ENCODE measurements at regions of chr3 and their contacts with region 1.

Region 1: DNA sequence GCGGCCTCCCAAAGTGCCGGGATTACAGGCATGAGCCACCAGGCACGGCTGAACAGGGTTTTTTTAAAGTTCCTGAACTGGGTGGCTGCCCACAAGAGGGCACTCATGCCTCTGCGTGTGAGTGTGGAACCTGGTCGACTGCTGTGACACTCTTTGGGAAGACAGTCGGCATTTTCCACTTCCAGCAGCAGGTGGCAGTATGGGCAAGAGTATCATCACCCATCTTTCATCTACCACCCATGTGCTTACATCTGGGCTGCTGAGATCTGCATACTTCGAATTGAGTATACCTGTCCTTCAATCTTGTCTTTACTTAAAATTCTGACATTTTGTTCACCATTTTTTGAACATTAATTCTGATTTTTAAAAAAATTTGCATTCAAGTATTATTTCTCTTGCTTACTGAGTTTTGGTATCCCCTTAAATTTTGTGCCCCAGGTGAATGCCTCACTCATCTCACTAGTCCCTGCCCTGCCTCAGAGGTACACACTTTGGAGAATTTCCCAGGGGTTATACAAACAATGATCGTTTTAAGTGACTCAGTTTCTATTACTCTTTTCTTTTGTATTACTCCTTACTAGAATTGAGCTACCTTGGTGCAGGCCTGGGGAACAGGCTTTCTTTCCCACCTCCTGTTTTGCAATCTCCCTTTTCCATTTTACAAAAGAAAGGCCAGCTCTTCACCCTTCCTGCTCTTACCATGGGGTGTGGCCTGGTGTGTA is 11.8 kb downstream of the CLEC3B start:
- DNase-seq: peak; percentile 80 to 89 (median 84)
- H3K4me3 ChIP-seq: no peak overlapping the region
- H3K27ac ChIP-seq: no peak overlapping the region
- H3K4me1 ChIP-seq: peaks cover 7% of the 10 kb centered on the region
- H3K27me3 ChIP-seq: no peaks in the 10 kb centered on the region
- CTCF ChIP-seq: peak; percentile 60 to 79 (median 73)
- EP300 ChIP-seq: no peak
- POLR2A ChIP-seq: no peak

Region 2: GRCh38 chr3:44913868-44914468 is 123.9 kb before region 1 on chr3:
- intact Hi-C with region 1: no loop called
- DNase-seq: peak; percentile 16 to 59 (median 38)
- H3K4me3 ChIP-seq: no peak overlapping the region
- H3K27ac ChIP-seq: no peak overlapping the region
- H3K4me1 ChIP-seq: no peaks in the 10 kb centered on the region
- H3K27me3 ChIP-seq: no peaks in the 10 kb centered on the region
- CTCF ChIP-seq: no peak
- EP300 ChIP-seq: no peak
- POLR2A ChIP-seq: no peak

Region 3: DNA sequence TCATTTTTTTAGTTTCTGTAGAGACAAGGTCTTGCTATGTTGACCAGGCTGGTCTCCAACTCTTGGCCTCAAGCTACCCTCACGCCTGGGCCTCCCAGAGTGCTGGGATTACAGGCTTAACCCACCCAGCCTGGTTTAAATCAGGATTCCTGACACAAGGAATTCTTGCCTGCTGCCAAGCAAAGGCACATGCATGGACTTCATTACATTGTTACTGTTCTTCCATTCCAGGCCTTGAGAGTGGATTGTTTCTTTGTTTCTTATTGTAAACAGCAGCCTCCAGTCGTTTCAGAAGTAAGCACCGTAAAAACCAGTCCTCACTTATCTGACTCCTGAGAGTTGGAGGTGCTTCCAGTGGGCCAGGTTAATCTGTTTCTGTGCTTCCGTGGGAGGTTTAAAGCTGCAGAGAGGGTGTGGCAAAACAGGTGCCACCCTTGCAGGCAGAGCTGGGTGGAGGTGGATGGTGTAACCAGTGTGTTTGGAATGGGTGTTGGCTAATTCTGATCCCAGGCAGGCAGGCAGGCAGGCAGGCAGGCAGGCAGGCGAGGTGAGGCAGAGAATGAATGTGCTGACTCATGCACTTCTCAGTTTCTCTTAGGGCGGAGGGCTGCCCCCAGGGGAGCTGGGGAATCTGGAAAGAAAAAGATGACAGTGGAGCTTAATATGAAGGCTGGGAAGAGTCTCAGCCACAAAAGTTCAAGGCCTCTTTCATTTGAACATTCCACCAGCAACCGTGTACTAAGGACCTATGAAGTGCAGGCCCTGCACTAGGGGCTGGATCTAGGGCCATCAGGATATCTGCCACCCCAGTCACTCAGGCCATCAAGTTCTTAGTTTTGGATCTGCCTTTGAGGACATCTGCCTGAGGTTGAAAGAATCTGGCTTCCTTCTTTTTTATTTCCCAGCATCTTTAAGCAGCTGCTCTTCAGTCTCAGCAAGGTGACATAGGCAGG is 145.3 kb after region 1 on chr3:
- intact Hi-C with region 1: no loop called
- DNase-seq: peak in 2 of 5 donors; percentile 16 to 40
- H3K4me3 ChIP-seq: no peak overlapping the region
- H3K27ac ChIP-seq: no peak overlapping the region
- H3K4me1 ChIP-seq: no peaks in the 10 kb centered on the region
- H3K27me3 ChIP-seq: no peaks in the 10 kb centered on the region
- CTCF ChIP-seq: no peak
- EP300 ChIP-seq: no peak
- POLR2A ChIP-seq: no peak

Region 4: GRCh38 chr3:45499529-45499928 is 461.6 kb after region 1 on chr3:
- intact Hi-C with region 1: loop called in 3 of 4 experiments (anchors 5 to 10 kb)
- DNase-seq: no peak
- H3K4me3 ChIP-seq: no peak overlapping the region
- H3K27ac ChIP-seq: no peak overlapping the region
- H3K4me1 ChIP-seq: no peaks in the 10 kb centered on the region
- H3K27me3 ChIP-seq: no peaks in the 10 kb centered on the region
- CTCF ChIP-seq: peak in 2 of 3 donors; percentile 13 to 30
- EP300 ChIP-seq: no peak
- POLR2A ChIP-seq: no peak

Region 5: GRCh38 chr3:45516829-45517228 is 478.9 kb after region 1 on chr3:
- intact Hi-C with region 1: loop called in 1 of 4 experiments (anchors 10 kb)
- DNase-seq: no peak
- H3K4me3 ChIP-seq: no peak overlapping the region
- H3K27ac ChIP-seq: no peak overlapping the region
- H3K4me1 ChIP-seq: no peaks in the 10 kb centered on the region
- H3K27me3 ChIP-seq: no peaks in the 10 kb centered on the region
- CTCF ChIP-seq: no peak
- EP300 ChIP-seq: no peak
- POLR2A ChIP-seq: no peak

Measured in ovary (tissue), 10 donors.